Calu3 (cell line): ENCODE measurements at regions of chr10 and their contacts with region 1.

Region 1: GRCh38 chr10:50417886-50418830 is 166.8 kb upstream of the ASAH2 start:
- DNase-seq: peak; percentile 81
- H3K4me3 Mint-ChIP-seq: peak overlapping the region; percentile 80
- H3K27ac Mint-ChIP-seq: peak overlapping the region; percentile 56
- H3K4me1 Mint-ChIP-seq: peaks cover 44% of the 10 kb centered on the region
- H3K27me3 Mint-ChIP-seq: no peaks in the 10 kb centered on the region
- CTCF ChIP-seq: no peak

Region 2: GRCh38 chr10:50325449-50326171 is 92.5 kb before region 1 on chr10:
- CTCF ChIA-PET with region 1: no interaction called
- intact Hi-C with region 1: loop called (anchors 5 kb)
- DNase-seq: peak; percentile 39
- H3K4me3 Mint-ChIP-seq: no peak overlapping the region
- H3K27ac Mint-ChIP-seq: peak overlapping the region; percentile 42
- H3K4me1 Mint-ChIP-seq: peaks cover 30% of the 10 kb centered on the region
- H3K27me3 Mint-ChIP-seq: no peaks in the 10 kb centered on the region
- CTCF ChIP-seq: no peak

Region 3: DNA sequence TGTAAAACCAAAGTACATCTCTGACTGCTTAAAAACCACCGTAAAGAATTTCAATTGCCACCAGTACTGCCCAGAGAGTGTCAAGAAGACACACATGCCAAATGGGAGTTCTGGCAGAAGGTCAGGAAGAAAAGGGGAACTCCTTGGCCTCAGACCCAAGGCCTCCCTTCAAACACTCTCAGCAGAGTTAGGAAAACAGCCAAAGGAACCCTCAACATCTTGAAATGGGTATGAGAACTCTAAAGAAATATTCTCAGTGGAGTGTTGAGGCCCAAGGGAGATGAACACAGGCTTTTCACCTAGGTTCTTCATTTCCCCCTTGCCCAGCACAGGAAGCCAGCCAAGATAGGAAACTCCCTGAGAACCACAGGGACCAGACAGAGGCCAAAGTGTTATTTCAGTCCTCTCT is 70.8 kb before region 1 on chr10:
- CTCF ChIA-PET with region 1: no interaction called
- intact Hi-C with region 1: no loop called
- DNase-seq: no peak
- H3K4me3 Mint-ChIP-seq: no peak overlapping the region
- H3K27ac Mint-ChIP-seq: no peak overlapping the region
- H3K4me1 Mint-ChIP-seq: no peaks in the 10 kb centered on the region
- H3K27me3 Mint-ChIP-seq: no peaks in the 10 kb centered on the region
- CTCF ChIP-seq: no peak

Region 4: DNA sequence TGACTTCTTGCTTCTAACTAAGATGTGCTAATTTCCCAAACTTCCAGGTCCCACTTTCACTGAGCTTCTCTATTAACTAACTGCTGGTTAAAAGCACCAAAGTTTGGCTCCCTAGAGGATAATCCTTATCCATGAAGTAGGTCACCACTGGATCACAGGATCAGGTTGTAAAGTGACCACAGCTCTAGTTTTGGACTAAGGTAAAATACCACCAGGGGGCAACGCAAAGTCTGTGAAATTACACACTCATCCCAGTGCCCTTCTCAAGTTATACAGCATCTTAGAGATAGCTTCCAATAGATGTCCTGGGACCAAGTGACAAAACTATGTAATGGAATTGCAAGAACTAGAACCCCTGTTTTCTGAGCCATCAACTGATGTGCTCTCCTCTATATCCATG is 50.4 kb before region 1 on chr10:
- CTCF ChIA-PET with region 1: interaction called, 14 read pairs
- intact Hi-C with region 1: loop called (anchors 5 kb)
- DNase-seq: peak; percentile 30
- H3K4me3 Mint-ChIP-seq: no peak overlapping the region
- H3K27ac Mint-ChIP-seq: no peak overlapping the region
- H3K4me1 Mint-ChIP-seq: no peaks in the 10 kb centered on the region
- H3K27me3 Mint-ChIP-seq: no peaks in the 10 kb centered on the region
- CTCF ChIP-seq: no peak

Region 5: GRCh38 chr10:50438049-50438936 is 20.1 kb after region 1 on chr10:
- CTCF ChIA-PET with region 1: no interaction called
- intact Hi-C with region 1: no loop called
- DNase-seq: no peak
- H3K4me3 Mint-ChIP-seq: no peak overlapping the region
- H3K27ac Mint-ChIP-seq: no peak overlapping the region
- H3K4me1 Mint-ChIP-seq: no peaks in the 10 kb centered on the region
- H3K27me3 Mint-ChIP-seq: no peaks in the 10 kb centered on the region
- CTCF ChIP-seq: no peak

Region 6: GRCh38 chr10:50511492-50512213 is 93.5 kb after region 1 on chr10:
- CTCF ChIA-PET with region 1: no interaction called
- intact Hi-C with region 1: loop called (anchors 5 kb)
- DNase-seq: peak; percentile 24
- H3K4me3 Mint-ChIP-seq: peak overlapping the region; percentile 13
- H3K27ac Mint-ChIP-seq: peak overlapping the region; percentile 21
- H3K4me1 Mint-ChIP-seq: peaks cover 39% of the 10 kb centered on the region
- H3K27me3 Mint-ChIP-seq: no peaks in the 10 kb centered on the region
- CTCF ChIP-seq: no peak